ENCODE measurements at regions of chr2 and their contacts with region 1.

Region 1: GRCh38 chr2:210617732-210618330 is 61.4 kb downstream of the CPS1 start:
- DNase-seq: no peak
- ATAC-seq: no peak

Region 2: GRCh38 chr2:210654091-210654490 is 36.3 kb after region 1 on chr2:
- intact Hi-C with region 1: no loop called
- DNase-seq: no peak
- ATAC-seq: no peak

Region 3: GRCh38 chr2:211157856-211158463 is 540.1 kb after region 1 on chr2:
- intact Hi-C with region 1: loop called (anchors 10 kb)
- DNase-seq: peak; percentile 75
- ATAC-seq: peak; percentile 83

Measured in Right ventricle myocardium superior (tissue), 1 donor.